ENCODE measurements at regions of chr4 and their contacts with region 1.

Region 1: GRCh38 chr4:42339935-42340406 is 57.3 kb upstream of the SHISA3 start:
- DNase-seq: peak; percentile 88
- H3K4me3 ChIP-seq: peak overlapping the region in 1 of 3 experiments; percentile 9
- H3K27ac ChIP-seq: peak overlapping the region; percentile 94
- H3K4me1 ChIP-seq: peaks cover 25% of the 10 kb centered on the region
- H3K27me3 ChIP-seq: no peaks in the 10 kb centered on the region
- CTCF ChIP-seq: no peak
- POLR2A ChIP-seq: peak; percentile 57

Region 2: GRCh38 chr4:42225286-42225685 is 114.7 kb before region 1 on chr4:
- CTCF ChIA-PET with region 1: no interaction called
- POLR2A ChIA-PET with region 1: no interaction called
- dilution Hi-C with region 1: no loop called
- intact Hi-C with region 1: no loop called
- DNase-seq: no peak
- H3K4me3 ChIP-seq: no peak overlapping the region
- H3K27ac ChIP-seq: no peak overlapping the region
- H3K4me1 ChIP-seq: no peaks in the 10 kb centered on the region
- H3K27me3 ChIP-seq: no peaks in the 10 kb centered on the region
- CTCF ChIP-seq: no peak
- POLR2A ChIP-seq: no peak

Region 3: DNA sequence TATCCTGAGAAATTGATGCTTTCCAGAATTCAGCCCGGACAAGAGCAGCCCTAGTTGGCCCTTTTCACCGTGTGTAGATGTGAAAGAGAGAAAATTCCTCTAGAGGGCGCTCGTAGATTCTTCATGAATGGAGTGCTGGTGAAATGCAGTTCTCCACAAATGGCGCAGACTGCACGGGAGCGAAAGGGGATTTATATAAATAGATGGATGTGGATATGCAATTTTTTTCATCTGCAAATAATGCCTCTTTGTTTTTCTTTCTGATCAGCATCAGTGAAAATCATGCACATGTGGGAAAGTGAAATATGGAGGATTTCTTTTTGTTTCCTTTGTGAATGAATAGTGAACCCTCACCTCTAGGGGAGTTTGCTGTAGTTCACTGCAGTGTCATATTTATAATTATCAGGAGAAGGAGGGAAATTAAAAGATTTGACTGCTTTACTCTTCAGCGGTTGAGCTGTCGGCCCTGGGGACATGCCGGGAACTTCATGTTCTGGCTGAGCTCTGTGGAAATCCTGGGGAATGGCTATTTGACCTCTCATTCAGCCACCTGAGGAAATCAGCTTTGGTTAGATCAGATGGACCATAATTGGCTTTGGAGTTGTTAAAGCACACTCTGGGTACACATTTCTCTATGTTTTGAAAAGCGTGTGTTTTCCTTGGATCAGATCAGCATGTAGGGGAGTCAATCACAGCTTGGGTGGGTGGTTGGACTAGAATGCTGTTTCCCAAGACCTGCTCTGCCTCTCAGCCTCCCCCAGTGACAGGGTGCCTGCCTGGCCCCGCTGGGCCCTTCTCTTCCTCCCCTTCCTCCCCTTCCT is 57.7 kb before region 1 on chr4:
- CTCF ChIA-PET with region 1: interaction called, 8 read pairs
- POLR2A ChIA-PET with region 1: no interaction called
- dilution Hi-C with region 1: no loop called
- intact Hi-C with region 1: loop called (anchors 1 kb)
- DNase-seq: peak; percentile 71
- H3K4me3 ChIP-seq: no peak overlapping the region
- H3K27ac ChIP-seq: no peak overlapping the region
- H3K4me1 ChIP-seq: peaks cover 3% of the 10 kb centered on the region
- H3K27me3 ChIP-seq: peaks cover 0 to 4% of the 10 kb centered on the region in 2 experiments
- CTCF ChIP-seq: peak; percentile 56 to 71
- POLR2A ChIP-seq: no peak

Region 4: DNA sequence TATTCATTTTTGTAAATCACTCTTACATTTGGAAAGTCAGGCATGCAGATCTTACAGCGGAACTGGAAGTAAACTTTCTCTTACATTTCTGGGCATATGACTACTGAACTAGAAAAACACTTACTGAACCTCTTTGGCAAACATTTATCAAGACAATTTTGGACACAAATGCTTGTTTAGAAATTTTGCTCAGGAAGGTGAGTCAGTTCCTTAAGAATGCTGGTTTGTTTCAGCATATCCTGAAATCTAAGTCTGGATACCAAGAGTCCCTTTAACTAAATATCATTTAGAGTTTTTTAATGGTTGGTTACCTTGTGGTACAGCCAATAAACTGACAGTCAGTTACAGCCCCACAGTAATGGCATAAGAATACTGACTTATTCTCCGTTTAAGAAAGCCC is 72.3 kb after region 1 on chr4:
- CTCF ChIA-PET with region 1: no interaction called
- POLR2A ChIA-PET with region 1: no interaction called
- dilution Hi-C with region 1: no loop called
- intact Hi-C with region 1: loop called (anchors 1 kb)
- DNase-seq: peak; percentile 89
- H3K4me3 ChIP-seq: no peak overlapping the region
- H3K27ac ChIP-seq: peak overlapping the region; percentile 80
- H3K4me1 ChIP-seq: peaks cover 33% of the 10 kb centered on the region
- H3K27me3 ChIP-seq: no peaks in the 10 kb centered on the region
- CTCF ChIP-seq: no peak
- POLR2A ChIP-seq: no peak

Region 5: GRCh38 chr4:42656944-42657792 is 317.2 kb after region 1 on chr4 and contains the start of gene ATP8A1:
- CTCF ChIA-PET with region 1: no interaction called
- POLR2A ChIA-PET with region 1: no interaction called
- dilution Hi-C with region 1: no loop called
- intact Hi-C with region 1: loop called (anchors 5 kb)
- DNase-seq: peak; percentile 89
- H3K4me3 ChIP-seq: peak within 1 kb of the TSS; percentile 12 to 48 (median 47)
- H3K27ac ChIP-seq: peak within 1 kb of the TSS; percentile 81
- H3K4me1 ChIP-seq: peaks cover 26% of the 10 kb centered on the region
- H3K27me3 ChIP-seq: peaks cover 2 to 16% of the 10 kb centered on the region in 2 experiments
- CTCF ChIP-seq: no peak
- POLR2A ChIP-seq: peak; percentile 45
- total RNA-seq, gene ATP8A1: 1.9 and 11.5 TPM in 2 replicates

Region 6: DNA sequence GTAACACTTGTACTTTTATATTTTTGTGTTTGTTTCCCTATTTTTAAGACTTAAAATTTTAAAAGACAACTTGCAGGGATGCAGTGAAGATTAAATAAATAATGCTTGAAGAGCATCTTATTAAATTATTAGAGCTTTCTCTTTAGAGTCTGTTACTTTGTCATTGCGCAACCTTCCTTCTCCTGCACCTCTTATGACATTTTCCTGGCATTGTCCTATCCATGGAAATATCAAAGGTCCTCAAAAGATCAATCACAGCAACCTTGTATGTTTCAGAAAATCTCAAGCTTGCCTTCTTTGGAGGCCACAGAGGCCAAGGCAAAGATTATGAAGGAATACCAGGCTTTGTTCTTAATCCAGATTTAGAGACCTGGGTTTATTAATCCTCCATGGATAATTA is 668.8 kb after region 1 on chr4:
- CTCF ChIA-PET with region 1: no interaction called
- POLR2A ChIA-PET with region 1: no interaction called
- dilution Hi-C with region 1: no loop called
- intact Hi-C with region 1: no loop called
- DNase-seq: no peak
- H3K4me3 ChIP-seq: no peak overlapping the region
- H3K27ac ChIP-seq: no peak overlapping the region
- H3K4me1 ChIP-seq: no peaks in the 10 kb centered on the region
- H3K27me3 ChIP-seq: no peaks in the 10 kb centered on the region
- CTCF ChIP-seq: no peak
- POLR2A ChIP-seq: no peak